ENCODE measurements at regions of chr1 and their contacts with region 1.

Region 1: GRCh38 chr1:117059678-117060440 is at the start of gene TTF2:
- H3K4me3 ChIP-seq: peak within 1 kb of the TSS; percentile 90
- H3K27ac ChIP-seq: peak within 1 kb of the TSS; percentile 86
- H3K4me1 ChIP-seq: no peaks in the 10 kb centered on the region
- CTCF ChIP-seq: peak; percentile 71

Region 2: GRCh38 chr1:116881879-116882520 is 177.9 kb before region 1 on chr1:
- CTCF ChIA-PET with region 1: interaction called, 3 read pairs
- POLR2A ChIA-PET with region 1: interaction called, 11 read pairs
- H3K4me3 ChIP-seq: no peak overlapping the region
- H3K27ac ChIP-seq: no peak overlapping the region
- H3K4me1 ChIP-seq: peaks cover 3% of the 10 kb centered on the region; the same call in 1 of the 2 replicates
- CTCF ChIP-seq: peak; percentile 49; the same call in 1 of the 2 replicates

Region 3: DNA sequence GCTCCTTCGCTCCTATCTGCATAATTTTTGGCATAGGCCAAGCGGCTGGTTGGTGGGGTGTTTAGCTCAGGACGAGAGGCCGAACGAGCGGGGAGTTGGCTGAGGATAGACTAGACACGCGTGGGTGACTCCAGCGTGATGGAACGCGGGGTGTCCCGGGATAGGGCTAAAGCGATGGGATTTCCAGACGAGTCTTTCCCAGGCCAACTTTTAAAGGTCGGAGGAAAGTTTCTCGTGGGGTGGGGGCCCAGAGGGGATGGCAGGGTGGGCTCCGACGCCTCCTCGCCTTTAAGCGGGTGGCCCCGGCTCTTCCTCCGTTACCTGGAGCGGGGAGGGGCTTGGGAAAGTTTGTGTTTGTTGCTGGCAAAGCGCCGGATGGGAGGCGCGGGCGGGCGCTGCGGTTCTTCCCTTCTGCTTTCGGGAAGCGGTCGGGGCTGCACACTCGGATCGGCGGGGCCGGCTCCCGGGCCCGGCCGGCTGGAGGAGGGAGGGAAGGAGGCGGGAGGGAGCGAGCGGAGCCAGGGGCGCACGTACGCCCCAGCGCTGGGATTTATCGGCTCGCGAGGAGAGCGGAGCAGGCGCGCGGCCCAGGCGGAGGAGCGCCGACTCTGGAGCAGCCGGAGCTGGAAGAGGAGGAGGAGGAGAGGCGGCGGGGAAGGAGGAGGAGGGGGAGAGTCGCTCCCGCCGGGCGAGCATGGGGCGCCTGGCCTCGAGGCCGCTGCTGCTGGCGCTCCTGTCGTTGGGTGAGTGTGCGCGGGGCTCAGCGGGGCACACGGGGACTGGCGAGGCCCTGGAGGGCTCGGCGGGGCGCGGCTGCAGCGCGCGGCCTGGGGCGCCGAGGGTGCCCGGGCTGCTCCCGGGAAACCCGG is 150.1 kb before region 1 on chr1 and contains the start of gene PTGFRN:
- CTCF ChIA-PET with region 1: no interaction called
- POLR2A ChIA-PET with region 1: interaction called, 15 read pairs
- H3K4me3 ChIP-seq: peak within 1 kb of the TSS; percentile 85
- H3K27ac ChIP-seq: peak within 1 kb of the TSS; percentile 77; the same call in 1 of the 2 replicates
- H3K4me1 ChIP-seq: peaks cover 5% of the 10 kb centered on the region; the same call in 1 of the 2 replicates
- CTCF ChIP-seq: peak; percentile 58

Region 4: DNA sequence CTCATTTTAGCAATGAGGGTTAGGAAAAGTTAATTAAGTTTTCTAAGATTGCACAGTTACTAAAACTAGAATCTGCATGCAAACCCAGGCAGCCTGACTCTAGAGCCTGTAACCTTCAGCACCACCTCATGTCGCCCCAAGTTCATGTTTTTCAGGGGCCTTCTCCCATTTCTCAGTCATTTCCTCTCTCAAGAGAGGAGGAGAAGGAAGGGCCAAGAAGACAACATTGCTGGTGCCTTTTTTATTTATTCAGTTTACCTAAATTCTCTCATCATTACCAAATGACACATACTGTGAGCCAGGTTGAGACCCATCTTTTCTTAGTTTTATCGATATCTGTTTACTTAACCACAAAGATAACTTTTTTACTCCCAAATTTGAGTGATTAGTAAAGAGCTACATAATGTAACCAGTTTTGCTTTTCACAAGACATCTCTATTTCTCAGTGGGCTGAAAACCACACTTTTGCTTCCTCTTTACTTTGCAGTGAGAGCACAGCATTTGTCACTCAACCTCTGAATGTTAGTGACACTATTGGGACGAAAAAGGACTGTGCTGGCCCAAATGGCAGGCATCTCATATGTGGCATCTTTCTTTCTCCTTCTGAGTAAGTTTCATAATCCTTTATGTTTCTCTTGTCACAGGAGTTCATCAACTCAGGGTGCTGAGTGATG is 58.5 kb before region 1 on chr1 and contains the start of gene CD101:
- CTCF ChIA-PET with region 1: no interaction called
- POLR2A ChIA-PET with region 1: no interaction called
- H3K4me3 ChIP-seq: no peak within 1 kb of the TSS
- H3K27ac ChIP-seq: no peak within 1 kb of the TSS
- H3K4me1 ChIP-seq: no peaks in the 10 kb centered on the region
- CTCF ChIP-seq: no peak